ENCODE measurements at regions of chr18 and their contacts with region 1.

Region 1: GRCh38 chr18:62522504-62523254 is at the start of gene ZCCHC2:
- DNase-seq: peak; percentile 100
- H3K4me3 Mint-ChIP-seq: peak within 1 kb of the TSS; percentile 93
- H3K27ac Mint-ChIP-seq: peak within 1 kb of the TSS; percentile 94
- H3K4me1 Mint-ChIP-seq: peaks cover 21% of the 10 kb centered on the region
- H3K27me3 Mint-ChIP-seq: no peaks in the 10 kb centered on the region
- total RNA-seq, gene ZCCHC2: 47.0 and 52.8 TPM in 2 replicates

Region 2: DNA sequence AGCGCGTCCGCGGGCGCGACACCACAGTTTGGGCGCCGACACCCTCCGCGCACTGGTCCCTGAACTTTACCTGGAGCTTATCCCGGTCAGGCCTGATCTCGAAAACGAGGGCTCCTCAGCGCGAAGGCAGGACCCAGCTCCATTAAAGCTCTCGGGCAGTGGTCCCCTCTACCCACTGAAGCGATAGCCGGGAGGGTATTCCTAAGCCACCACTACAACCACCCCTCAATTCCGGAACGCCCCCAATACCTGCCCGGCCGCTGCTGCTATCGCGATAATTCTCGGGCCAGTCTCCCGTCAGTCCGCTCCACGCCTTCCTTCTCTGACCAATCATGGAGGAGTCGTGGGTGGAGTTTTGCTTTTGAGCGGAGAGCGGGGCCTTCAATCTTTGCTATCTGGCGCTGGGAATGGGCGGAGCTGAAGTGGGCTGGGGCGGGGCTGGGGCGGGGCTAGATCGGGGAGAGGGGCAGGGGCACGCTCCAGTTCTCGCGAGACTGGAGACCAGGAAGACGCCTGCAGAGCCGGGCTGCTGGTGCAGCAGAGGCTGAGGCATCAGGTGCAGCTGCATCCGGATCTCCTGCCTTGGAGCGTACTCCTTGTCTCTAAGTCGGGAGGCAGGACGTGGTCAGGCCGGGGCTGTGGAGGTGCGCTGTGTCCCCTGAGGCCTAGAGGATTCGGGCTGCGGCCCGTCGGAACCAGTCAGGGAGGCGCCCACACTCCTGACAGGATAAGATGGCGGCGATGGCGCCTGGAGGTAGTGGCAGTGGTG is 335.7 kb before region 1 on chr18 and contains the starts of genes PIGN and RELCH:
- intact Hi-C with region 1: loop called (anchors 1 kb)
- DNase-seq: peak; percentile 98
- H3K4me3 Mint-ChIP-seq: peak within 1 kb of the TSS; percentile 100
- H3K27ac Mint-ChIP-seq: peak within 1 kb of the TSS; percentile 97
- H3K4me1 Mint-ChIP-seq: peaks cover 42% of the 10 kb centered on the region
- H3K27me3 Mint-ChIP-seq: no peaks in the 10 kb centered on the region
- total RNA-seq, gene PIGN: 32.0 and 33.9 TPM in 2 replicates
- total RNA-seq, gene RELCH: 30.6 and 31.1 TPM in 2 replicates

Region 3: DNA sequence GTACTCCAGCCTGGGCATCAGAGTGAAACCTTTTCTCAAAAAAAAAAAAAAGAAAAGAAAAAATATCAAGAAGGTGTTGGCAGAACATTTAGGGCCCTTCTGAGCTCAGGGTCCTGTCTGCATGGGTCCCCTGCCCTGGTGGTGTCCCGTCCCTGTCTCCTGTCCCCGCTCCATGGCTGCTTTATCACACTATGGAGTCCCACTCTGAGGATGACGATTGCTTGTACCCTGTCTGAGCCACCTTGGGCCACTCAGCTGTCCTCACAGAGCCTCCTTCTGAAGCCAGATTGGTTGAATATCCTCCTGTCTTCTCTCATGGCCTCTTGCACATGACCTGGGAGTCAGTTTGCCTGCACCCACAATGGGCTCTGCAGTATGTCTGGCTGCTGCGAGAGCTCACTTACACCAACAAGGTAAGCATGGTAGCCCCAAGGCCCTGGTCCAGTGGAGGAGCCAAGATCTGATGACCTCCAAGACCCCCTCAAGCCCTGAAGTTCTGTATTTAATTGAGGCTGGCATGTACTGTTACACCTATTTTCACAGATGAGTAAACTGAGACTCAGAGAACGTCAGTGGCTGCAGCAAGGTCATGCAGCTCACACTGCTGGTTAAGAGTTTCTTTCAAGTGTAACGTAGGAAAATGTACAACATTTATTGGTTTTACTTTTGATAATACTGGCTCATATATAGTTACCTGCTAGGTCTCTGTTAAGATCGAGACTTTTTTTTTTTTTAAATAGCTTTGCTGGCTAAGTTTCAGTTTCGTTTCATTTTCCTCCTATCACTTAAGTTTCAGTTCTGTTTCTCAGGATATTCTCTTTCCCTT is 16.8 kb before region 1 on chr18:
- intact Hi-C with region 1: loop called (anchors 1 kb)
- DNase-seq: peak; percentile 81
- H3K4me3 Mint-ChIP-seq: peak overlapping the region; percentile 79
- H3K27ac Mint-ChIP-seq: peak overlapping the region; percentile 98
- H3K4me1 Mint-ChIP-seq: peaks cover 23% of the 10 kb centered on the region
- H3K27me3 Mint-ChIP-seq: no peaks in the 10 kb centered on the region

Region 4: DNA sequence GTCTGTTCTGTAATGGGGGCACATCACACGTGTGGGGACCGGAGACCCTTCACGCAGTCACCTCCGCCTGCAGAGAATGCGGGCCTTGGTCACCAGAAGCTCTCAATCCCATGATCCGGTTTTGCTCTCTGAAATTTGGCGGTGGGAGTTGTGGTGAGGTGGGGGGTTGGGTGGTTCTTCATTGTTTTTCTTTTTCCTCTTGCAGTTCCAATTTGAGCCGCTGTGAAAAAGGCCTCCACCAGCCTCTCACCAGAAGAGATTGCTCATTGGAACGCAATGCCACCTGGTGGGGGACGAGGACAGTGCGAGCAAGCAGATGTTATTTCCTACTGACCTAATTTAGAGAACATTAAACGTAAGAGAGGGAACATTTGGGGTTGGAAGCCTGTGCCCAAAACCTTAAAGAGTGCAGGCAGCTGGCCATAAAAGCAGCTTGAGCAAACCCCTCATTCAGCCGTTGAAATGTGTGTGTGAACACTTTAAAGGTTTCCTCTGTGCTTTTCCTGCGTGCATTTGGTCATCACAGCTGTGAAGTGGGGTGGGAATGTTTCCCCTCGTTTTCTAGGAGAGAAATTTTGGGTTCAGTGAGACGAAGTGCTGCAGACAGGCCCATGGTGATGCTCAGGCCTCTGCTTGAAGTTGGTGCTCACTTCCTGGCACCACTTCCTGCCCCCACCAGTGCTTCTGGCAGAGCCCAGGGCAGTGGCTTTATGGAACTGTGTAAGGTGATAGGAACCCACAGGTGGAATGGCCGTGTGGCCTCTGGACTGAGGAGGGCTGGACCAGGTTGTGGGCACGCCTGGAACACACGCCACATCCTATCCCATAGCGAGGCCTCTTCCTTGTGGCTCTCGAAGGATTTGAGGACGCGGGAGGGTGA is 61.8 kb after region 1 on chr18:
- intact Hi-C with region 1: loop called (anchors 5 kb)
- DNase-seq: peak; percentile 94
- H3K4me3 Mint-ChIP-seq: peak overlapping the region; percentile 59
- H3K27ac Mint-ChIP-seq: peak overlapping the region; percentile 82
- H3K4me1 Mint-ChIP-seq: peaks cover 40% of the 10 kb centered on the region
- H3K27me3 Mint-ChIP-seq: no peaks in the 10 kb centered on the region

Region 5: GRCh38 chr18:63155169-63155852 is 632.6 kb after region 1 on chr18:
- intact Hi-C with region 1: loop called (anchors 10 kb)
- DNase-seq: peak; percentile 95
- H3K4me3 Mint-ChIP-seq: peak overlapping the region; percentile 83
- H3K27ac Mint-ChIP-seq: peak overlapping the region; percentile 98
- H3K4me1 Mint-ChIP-seq: peaks cover 91% of the 10 kb centered on the region
- H3K27me3 Mint-ChIP-seq: no peaks in the 10 kb centered on the region